ENCODE measurements at regions of chr9 and their contacts with region 1.

Region 1: DNA sequence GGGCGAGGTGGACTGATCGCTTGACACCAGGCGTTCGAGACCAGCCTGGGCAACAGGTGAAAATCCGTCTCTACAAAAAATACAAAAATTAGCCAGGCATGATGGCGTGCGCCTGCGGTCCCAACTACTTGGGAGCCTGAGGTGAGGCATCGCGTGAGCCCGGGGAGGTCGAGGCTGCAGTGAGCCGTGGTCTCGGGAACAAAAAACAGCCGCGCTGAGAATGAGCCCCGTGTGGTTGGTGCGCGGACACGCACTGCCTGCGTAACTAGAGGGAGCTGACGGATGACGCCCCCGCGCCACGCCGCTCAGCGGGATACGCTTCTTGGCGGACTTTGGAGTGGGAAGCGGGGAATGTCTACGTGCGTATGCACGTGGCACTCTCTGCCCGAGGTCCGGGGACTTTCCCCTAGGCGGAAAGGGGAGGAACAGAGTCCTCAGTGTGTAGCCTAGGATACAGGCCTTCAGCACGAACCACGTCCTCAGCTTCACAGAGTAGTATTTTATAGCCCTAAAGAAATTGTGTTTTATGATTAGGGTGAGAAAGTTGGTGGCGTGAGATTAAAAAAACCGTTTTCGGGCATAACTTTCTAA is at the start of gene RMRP:
- DNase-seq: peak; percentile 96 to 98
- ATAC-seq: peak; percentile 94 to 97 (median 96)
- H3K4me3 ChIP-seq: peak within 1 kb of the TSS; percentile 73 to 98 (median 88)
- H3K27ac ChIP-seq: peak within 1 kb of the TSS; percentile 95 to 99 (median 98)
- H3K4me1 ChIP-seq: peaks cover 0 to 56% (median 34%) of the 10 kb centered on the region in 9 donors
- H3K27me3 ChIP-seq: no peaks in the 10 kb centered on the region
- CTCF ChIP-seq: peak in 7 of 9 donors; percentile 14 to 59 (median 46)
- total RNA-seq, gene RMRP: 3,879 to 14,997 (median 5,788) TPM

Region 2: DNA sequence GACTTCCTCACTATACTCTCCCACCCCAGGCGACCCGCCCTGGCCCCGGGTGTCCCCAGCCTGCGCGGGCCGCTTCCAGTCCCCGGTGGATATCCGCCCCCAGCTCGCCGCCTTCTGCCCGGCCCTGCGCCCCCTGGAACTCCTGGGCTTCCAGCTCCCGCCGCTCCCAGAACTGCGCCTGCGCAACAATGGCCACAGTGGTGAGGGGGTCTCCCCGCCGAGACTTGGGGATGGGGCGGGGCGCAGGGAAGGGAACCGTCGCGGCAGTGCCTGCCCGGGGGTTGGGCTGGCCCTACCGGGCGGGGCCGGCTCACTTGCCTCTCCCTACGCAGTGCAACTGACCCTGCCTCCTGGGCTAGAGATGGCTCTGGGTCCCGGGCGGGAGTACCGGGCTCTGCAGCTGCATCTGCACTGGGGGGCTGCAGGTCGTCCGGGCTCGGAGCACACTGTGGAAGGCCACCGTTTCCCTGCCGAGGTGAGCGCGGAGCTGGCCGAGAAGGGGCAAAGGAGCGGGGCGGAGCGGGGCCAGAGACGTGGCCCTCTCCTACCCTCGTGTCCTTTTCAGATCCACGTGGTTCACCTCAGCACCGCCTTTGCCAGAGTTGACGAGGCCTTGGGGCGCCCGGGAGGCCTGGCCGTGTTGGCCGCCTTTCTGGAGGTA is 18.2 kb after region 1 on chr9:
- intact Hi-C with region 1: no loop called
- DNase-seq: peak; percentile 49 to 64
- ATAC-seq: peak; percentile 49 to 75 (median 60)
- H3K4me3 ChIP-seq: peak overlapping the region; percentile 20 to 75 (median 58)
- H3K27ac ChIP-seq: peak overlapping the region in 3 of 10 donors; percentile 20 to 39 (median 25)
- H3K4me1 ChIP-seq: peaks cover 0 to 23% (median 13%) of the 10 kb centered on the region in 9 donors
- H3K27me3 ChIP-seq: peaks cover 0 to 16% (median 0%) of the 10 kb centered on the region in 7 donors
- CTCF ChIP-seq: peak in 1 of 9 donors; percentile 19

Region 3: GRCh38 chr9:35690431-35691333 is 33.0 kb after region 1 on chr9:
- intact Hi-C with region 1: loop called in 6 of 10 experiments (anchors 2 to 5 kb)
- DNase-seq: peak; percentile 84 to 90
- ATAC-seq: peak; percentile 59 to 75 (median 66)
- H3K4me3 ChIP-seq: peak overlapping the region; percentile 33 to 86 (median 71)
- H3K27ac ChIP-seq: peak overlapping the region; percentile 72 to 100 (median 94)
- H3K4me1 ChIP-seq: peaks cover under 1 to 48% (median 45%) of the 10 kb centered on the region in 9 donors
- H3K27me3 ChIP-seq: peaks cover 0 to 8% (median 0%) of the 10 kb centered on the region in 7 donors
- CTCF ChIP-seq: no peak

Region 4: DNA sequence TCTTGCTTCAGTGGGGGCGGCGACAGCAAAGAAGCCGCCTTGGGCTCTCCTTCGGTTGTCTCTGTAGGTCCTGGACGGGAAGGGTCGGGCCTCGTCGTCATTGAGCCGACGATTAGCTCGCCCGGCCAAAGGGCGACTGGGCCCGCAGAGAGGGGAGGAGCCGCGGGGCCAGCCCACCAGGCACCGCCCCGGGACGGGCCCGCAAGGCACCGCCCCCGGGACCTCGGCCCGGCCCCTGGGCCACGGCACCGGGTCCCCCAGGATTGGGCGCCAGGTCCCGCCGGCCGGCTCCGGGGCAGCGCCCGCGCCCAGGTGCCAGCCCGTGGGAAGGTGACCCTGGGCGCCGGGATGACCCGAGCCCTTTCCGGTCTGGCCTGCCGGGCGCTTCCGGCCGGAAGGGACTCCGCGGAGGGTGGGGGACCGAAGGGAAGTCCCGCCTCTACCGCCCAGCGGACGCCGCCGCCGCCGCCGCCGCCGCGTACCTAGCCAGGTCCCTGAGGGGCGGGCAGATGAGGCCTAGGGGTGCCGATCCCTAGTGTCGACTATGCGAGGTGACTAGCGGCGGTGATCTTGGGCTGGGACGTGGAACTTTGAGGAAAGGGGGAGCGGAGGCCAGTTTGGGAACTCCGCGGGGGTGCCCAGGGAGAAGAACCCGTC is 91.3 kb after region 1 on chr9 and contains the starts of genes GBA2 and RGP1:
- intact Hi-C with region 1: loop called in 1 of 10 experiments (anchors 5 kb)
- DNase-seq: peak; percentile 82 to 90
- ATAC-seq: peak; percentile 90 to 95 (median 92)
- H3K4me3 ChIP-seq: peak within 1 kb of the TSS; percentile 71 to 99 (median 92)
- H3K27ac ChIP-seq: peak within 1 kb of the TSS; percentile 88 to 99 (median 98)
- H3K4me1 ChIP-seq: peaks cover 7 to 64% (median 54%) of the 10 kb centered on the region in 9 donors
- H3K27me3 ChIP-seq: no peaks in the 10 kb centered on the region
- CTCF ChIP-seq: no peak
- total RNA-seq, gene GBA2: 47.4 to 101 (median 74.7) TPM
- total RNA-seq, gene RGP1: 31.1 to 39.4 (median 34.0) TPM

Region 5: DNA sequence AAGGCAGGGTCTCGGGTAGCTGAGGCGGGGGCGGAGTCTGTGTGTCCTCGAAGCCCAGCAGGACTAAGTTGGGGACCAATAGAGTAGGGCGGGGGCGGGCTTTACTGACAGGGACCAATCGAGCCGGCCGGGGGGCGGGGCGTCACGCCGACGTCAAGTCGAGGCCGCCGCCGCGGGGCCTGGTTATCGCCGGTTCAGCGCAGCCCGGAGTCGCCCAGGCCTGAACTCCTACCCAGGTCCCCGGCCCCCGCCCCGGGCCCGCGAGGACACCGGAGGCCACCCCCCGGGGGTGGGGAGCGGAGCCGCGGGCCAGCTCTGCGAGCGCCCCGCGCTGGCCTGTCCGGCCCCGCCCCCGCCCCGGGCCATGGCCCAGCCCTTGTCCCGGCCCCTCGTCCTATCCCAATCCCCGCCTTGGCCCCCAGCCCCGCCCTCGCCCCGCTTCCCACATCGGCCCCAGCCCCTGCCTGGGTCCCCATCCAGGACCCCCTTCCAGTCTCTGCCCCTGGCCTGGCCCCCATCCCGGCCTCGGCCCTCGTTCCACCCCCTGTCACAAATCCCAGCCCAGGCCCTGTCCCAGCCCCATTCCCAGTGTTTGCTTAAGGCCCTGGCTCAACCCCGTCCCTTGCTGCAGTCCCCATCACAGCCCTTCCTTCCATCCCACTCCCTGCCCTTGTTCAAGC is 171.6 kb after region 1 on chr9 and contains the start of gene TMEM8B:
- intact Hi-C with region 1: loop called in 1 of 10 experiments (anchors 5 kb)
- DNase-seq: peak; percentile 96 to 98
- ATAC-seq: peak; percentile 91 to 94 (median 92)
- H3K4me3 ChIP-seq: peak within 1 kb of the TSS; percentile 70 to 87 (median 82)
- H3K27ac ChIP-seq: peak within 1 kb of the TSS; percentile 91 to 98 (median 96)
- H3K4me1 ChIP-seq: peaks cover 4 to 53% (median 39%) of the 10 kb centered on the region in 9 donors
- H3K27me3 ChIP-seq: no peaks in the 10 kb centered on the region
- CTCF ChIP-seq: no peak
- total RNA-seq, gene TMEM8B: 13.6 to 22.9 (median 20.5) TPM

Region 6: DNA sequence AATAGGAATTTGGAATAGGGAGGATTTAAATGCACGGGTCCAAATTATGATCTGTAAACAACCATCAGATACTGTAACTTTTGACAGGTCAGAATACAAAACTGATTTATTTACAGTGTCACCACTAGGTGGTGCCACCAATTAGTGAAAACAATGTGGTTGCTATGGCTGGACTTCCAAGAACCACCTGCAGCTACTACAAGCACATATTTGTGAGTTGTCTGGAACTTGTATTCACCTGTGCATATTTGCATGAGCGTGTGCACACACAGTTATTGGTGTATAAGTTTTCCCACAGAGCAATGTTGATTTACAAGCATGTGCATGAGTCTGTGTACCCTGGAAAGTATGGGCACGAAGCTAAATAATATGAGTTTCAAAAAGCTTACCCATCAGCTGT is 245.4 kb after region 1 on chr9:
- intact Hi-C with region 1: loop called in 1 of 10 experiments (anchors 10 kb)
- DNase-seq: peak in 1 of 2 donors; percentile 55
- ATAC-seq: no peak
- H3K4me3 ChIP-seq: no peak overlapping the region
- H3K27ac ChIP-seq: peak overlapping the region in 1 of 10 donors; percentile 98
- H3K4me1 ChIP-seq: peaks cover 19 to 53% (median 50%) of the 10 kb centered on the region in 9 donors
- H3K27me3 ChIP-seq: no peaks in the 10 kb centered on the region
- CTCF ChIP-seq: peak; percentile 61 to 82 (median 77)